HepG2 (cell line): ENCODE measurements at regions of chr15 and their contacts with region 1.

Region 1: GRCh38 chr15:62896978-62897647 is 145.4 kb upstream of the TPM1 start:
- DNase-seq: peak; percentile 93
- ATAC-seq: peak; percentile 91
- H3K4me3 ChIP-seq: peak overlapping the region in 2 of 3 experiments; percentile 54 to 57; a peak in 4 of 6 replicates
- H3K27ac ChIP-seq: peak overlapping the region; percentile 63
- H3K4me1 ChIP-seq: peaks cover 52% of the 10 kb centered on the region
- H3K27me3 ChIP-seq: no peaks in the 10 kb centered on the region
- CTCF ChIP-seq: no peak
- EP300 ChIP-seq: peak in 1 of 2 experiments; percentile 83; a peak in 2 of 4 replicates
- POLR2A ChIP-seq: no peak
- RAD21 ChIP-seq: no peak

Region 2: GRCh38 chr15:62976301-62976881 is 79.3 kb after region 1 on chr15:
- CTCF ChIA-PET with region 1: no interaction called
- POLR2A ChIA-PET with region 1: no interaction called
- in situ Hi-C with region 1: no loop called
- intact Hi-C with region 1: no loop called
- DNase-seq: no peak
- ATAC-seq: no peak
- H3K4me3 ChIP-seq: no peak overlapping the region
- H3K27ac ChIP-seq: no peak overlapping the region
- H3K4me1 ChIP-seq: no peaks in the 10 kb centered on the region
- H3K27me3 ChIP-seq: peaks cover 0 to 10% of the 10 kb centered on the region in 2 experiments; a peak in 2 of 5 replicates
- CTCF ChIP-seq: no peak
- EP300 ChIP-seq: no peak
- POLR2A ChIP-seq: no peak
- RAD21 ChIP-seq: no peak

Region 3: GRCh38 chr15:63019539-63020109 is 122.5 kb after region 1 on chr15:
- CTCF ChIA-PET with region 1: no interaction called
- POLR2A ChIA-PET with region 1: no interaction called
- in situ Hi-C with region 1: no loop called
- intact Hi-C with region 1: loop called (anchors 10 kb)
- DNase-seq: peak; percentile 50
- ATAC-seq: peak; percentile 65
- H3K4me3 ChIP-seq: no peak overlapping the region; a peak in 1 of 6 replicates
- H3K27ac ChIP-seq: no peak overlapping the region
- H3K4me1 ChIP-seq: peaks cover 78% of the 10 kb centered on the region
- H3K27me3 ChIP-seq: no peaks in the 10 kb centered on the region
- CTCF ChIP-seq: no peak
- EP300 ChIP-seq: no peak
- POLR2A ChIP-seq: no peak
- RAD21 ChIP-seq: no peak